ENCODE measurements at regions of chr17 and their contacts with region 1.

Region 1: GRCh38 chr17:46782250-46782953 is 36.1 kb downstream of the WNT3 start:
- DNase-seq: peak in 4 of 6 donors; percentile 41 to 74 (median 72)
- ATAC-seq: peak; percentile 86 to 91 (median 90)
- H3K4me3 ChIP-seq: no peak overlapping the region
- H3K27ac ChIP-seq: peak overlapping the region in 2 of 4 donors; percentile 1 to 26
- H3K4me1 ChIP-seq: peaks cover 0 to 6% (median 0%) of the 10 kb centered on the region in 3 donors
- H3K27me3 ChIP-seq: no peaks in the 10 kb centered on the region
- CTCF ChIP-seq: peak; percentile 32 to 58 (median 54)

Region 2: DNA sequence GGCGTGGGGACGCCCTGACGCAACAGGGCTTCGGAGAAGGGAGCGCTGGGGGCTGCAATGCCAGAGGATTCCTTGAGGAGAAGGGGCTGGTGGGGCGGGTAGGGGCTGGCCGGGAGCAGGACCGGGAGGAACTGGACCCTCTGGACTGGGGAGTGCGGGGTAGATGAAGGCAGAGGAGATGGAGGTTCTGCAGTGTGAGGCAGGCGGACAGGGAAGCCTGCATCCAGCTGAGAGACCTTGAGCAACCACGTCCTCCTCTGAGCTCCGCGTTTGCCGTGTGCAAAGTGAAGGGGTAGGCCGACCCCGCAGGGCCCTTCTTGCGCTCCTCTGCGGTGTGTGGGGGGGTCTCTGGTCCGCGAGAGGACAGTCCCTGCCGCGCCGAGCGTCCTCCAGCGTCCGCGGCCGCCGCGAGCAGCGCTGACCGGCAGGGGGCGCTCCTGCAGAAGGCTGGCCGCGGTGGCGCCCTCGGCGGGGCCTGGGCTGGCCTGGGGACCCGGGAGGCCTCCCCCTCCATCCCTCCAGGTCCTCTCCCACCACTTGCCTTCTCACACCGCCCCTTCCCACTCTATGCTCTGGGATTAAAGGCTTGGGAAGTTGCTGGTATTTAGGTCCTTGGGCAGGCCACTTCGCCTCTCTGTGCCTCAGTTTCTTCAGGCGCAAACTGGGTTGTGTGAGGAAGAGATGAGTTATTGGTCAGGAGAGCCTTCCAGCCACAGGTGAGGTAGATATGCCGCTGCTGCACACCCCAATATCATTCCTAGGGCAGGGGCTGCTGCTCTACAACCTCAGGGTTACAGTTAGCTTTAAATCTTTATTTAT is 59.4 kb after region 1 on chr17:
- intact Hi-C with region 1: loop called in 1 of 3 experiments (anchors 10 kb)
- DNase-seq: peak in 3 of 6 donors; percentile 42 to 85 (median 56)
- ATAC-seq: peak; percentile 79 to 93 (median 88)
- H3K4me3 ChIP-seq: no peak overlapping the region
- H3K27ac ChIP-seq: no peak overlapping the region
- H3K4me1 ChIP-seq: no peaks in the 10 kb centered on the region
- H3K27me3 ChIP-seq: peaks cover 0 to 5% (median 0%) of the 10 kb centered on the region in 4 donors
- CTCF ChIP-seq: peak; percentile 74 to 88 (median 80)